Calu3 (cell line): ENCODE measurements at regions of chr9 and their contacts with region 1.

Region 1: GRCh38 chr9:127734747-127735529 is at the start of gene TOR2A:
- DNase-seq: peak; percentile 95
- H3K4me3 Mint-ChIP-seq: peak within 1 kb of the TSS; percentile 67
- H3K27ac Mint-ChIP-seq: no peak within 1 kb of the TSS
- H3K4me1 Mint-ChIP-seq: no peaks in the 10 kb centered on the region
- H3K27me3 Mint-ChIP-seq: peaks cover 39% of the 10 kb centered on the region
- CTCF ChIP-seq: peak; percentile 88
- total RNA-seq, gene TOR2A: 7.0 and 7.6 TPM in 2 replicates

Region 2: DNA sequence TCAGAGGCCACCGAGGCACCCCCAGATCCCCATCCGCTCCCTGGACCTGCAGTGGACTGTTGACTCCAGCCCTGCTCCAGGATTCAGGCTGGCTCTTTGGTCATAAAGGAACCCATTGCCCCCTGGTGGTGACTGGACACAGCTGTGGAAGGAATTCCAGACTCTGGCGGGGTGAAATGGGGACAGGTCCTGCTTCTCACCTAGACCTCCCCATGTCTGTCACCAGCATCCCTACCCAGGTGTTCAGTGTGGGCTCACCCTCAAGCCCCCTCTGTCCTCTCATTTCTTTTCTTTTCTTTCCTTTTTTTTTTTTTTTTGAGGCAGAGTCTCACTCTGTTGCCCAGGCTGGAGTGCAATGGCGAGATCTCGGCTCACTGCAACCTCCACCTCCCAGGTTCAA is 148.4 kb before region 1 on chr9:
- CTCF ChIA-PET with region 1: interaction called, 9 read pairs
- intact Hi-C with region 1: loop called (anchors 5 kb)
- DNase-seq: peak; percentile 79
- H3K4me3 Mint-ChIP-seq: no peak overlapping the region
- H3K27ac Mint-ChIP-seq: no peak overlapping the region
- H3K4me1 Mint-ChIP-seq: peaks cover 13% of the 10 kb centered on the region
- H3K27me3 Mint-ChIP-seq: no peaks in the 10 kb centered on the region
- CTCF ChIP-seq: peak; percentile 59

Region 3: GRCh38 chr9:127770905-127771569 is 36.1 kb after region 1 on chr9:
- CTCF ChIA-PET with region 1: interaction called, 10 read pairs
- intact Hi-C with region 1: no loop called
- DNase-seq: peak; percentile 96
- H3K4me3 Mint-ChIP-seq: peak overlapping the region; percentile 82
- H3K27ac Mint-ChIP-seq: no peak overlapping the region
- H3K4me1 Mint-ChIP-seq: no peaks in the 10 kb centered on the region
- H3K27me3 Mint-ChIP-seq: peaks cover 47% of the 10 kb centered on the region
- CTCF ChIP-seq: no peak

Region 4: DNA sequence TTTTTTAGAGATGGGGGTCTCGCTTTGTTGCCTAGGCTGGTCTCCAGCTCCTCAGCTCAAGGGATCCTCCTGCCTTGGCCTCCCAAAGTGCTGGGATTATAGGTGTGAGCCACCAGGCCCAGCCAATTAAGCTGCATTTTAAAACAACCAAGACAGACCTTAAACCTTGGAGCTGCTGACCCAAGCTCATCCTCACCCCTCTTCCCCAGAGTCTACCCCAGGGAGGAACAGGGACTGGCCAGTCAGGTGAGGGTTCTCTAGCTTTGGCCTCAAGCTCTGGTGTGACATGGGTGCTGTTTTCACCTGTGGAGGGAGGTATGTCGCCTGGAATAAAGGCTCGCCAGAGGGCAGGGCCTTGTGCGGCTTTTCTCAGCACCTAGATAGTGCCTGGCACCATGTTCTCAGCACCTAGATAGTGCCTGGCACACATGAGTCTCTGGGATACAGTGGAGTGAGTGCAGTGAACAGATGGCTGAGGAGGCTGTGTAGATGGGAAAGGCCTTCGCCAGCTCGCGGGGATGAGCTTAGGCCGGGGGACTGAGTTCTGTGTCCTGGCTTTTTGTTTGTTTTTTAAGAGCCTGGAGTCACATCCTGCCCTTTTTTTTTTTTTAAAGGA is 58.3 kb after region 1 on chr9:
- CTCF ChIA-PET with region 1: no interaction called
- intact Hi-C with region 1: no loop called
- DNase-seq: no peak
- H3K4me3 Mint-ChIP-seq: no peak overlapping the region
- H3K27ac Mint-ChIP-seq: no peak overlapping the region
- H3K4me1 Mint-ChIP-seq: no peaks in the 10 kb centered on the region
- H3K27me3 Mint-ChIP-seq: no peaks in the 10 kb centered on the region
- CTCF ChIP-seq: no peak

Region 5: DNA sequence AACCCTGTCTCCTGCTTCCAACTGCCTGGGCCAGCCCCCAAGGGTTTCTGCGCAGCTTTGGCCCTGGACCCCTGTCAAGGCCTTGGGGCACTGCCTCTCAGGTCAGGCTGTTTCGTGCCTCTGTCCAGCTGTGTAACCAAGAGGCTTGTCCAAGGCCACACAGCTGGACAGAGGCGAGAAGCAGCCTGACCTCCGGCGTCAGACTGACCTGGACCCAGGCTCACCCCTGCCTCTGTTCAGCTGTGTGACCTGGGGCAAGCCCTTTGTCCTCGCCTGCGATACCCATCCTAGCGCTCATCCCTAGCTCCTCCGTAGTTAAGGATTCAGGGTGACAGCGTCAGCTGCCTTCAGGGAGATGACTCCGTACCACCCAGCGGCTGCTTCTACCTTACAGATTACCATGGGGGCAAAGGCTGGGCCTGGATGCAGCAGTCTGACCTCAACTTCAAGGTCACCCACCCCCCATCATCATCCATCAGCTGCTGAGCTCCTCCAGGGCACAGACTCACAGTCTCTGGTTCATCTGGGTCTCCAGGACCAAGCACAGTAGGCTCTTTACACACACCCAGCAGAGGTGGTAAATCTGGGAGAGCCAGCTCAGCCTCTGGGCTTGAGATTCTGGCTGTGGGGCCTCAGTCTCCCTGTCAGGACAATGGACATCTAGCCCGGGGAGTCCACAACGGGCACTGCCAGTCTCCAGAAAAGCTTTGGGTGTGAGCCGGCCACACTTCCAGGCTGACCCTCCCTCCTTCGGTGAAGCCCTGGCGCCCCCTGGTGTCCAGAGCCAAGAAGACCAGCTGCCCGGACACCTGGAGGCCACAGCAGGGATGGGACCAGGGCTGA is 134.6 kb after region 1 on chr9:
- CTCF ChIA-PET with region 1: interaction called, 21 read pairs
- intact Hi-C with region 1: loop called (anchors 5 kb)
- DNase-seq: peak; percentile 89
- H3K4me3 Mint-ChIP-seq: no peak overlapping the region
- H3K27ac Mint-ChIP-seq: no peak overlapping the region
- H3K4me1 Mint-ChIP-seq: no peaks in the 10 kb centered on the region
- H3K27me3 Mint-ChIP-seq: no peaks in the 10 kb centered on the region
- CTCF ChIP-seq: peak; percentile 74

Region 6: DNA sequence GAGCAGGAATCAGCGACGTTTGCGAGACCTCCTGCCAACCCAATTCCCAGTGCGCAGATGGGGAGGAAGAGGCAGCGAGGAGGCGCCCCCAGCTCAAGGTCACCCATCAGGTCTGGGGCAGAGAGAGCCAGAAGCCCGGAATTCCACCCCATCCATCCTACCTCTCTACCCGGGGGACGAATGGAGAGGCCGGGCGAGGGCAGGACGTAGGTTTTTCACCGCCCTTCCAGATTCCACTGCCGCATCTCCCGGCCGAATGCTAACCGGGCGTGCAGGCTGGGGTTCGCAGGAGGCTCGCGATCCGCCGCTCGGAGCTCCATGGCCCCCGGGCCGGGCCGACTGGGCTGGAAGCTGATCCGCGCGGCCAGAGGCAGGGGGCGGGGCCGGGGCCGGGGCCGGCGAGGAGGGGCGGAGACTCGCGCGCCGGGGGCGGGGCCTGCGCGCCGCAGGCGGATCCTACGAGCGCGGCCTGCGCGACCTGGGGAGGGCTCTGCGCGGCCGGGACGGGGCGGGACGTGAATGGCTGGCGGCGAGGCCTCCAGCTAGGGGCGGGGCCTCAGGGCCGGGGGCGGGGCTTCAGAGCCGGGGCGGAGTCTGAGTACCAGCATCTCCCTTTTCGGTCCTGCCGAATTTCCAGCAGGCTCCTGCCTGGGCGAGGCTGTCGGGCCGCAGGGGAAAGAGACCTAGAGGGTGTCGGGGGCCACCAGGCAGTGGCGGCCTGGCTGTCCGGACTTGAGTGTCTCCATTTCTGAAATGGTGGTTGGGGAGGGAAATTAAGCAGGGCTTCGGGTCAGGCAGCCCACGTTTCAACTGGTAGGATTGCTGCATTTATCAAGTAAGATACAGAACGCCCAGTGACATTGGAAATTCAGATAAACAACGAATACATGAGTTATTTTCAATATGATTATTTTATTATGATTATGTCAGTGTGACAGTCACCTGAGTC is 182.0 kb after region 1 on chr9 and contains the start of gene ST6GALNAC4:
- CTCF ChIA-PET with region 1: interaction called, 10 read pairs
- intact Hi-C with region 1: no loop called
- DNase-seq: peak; percentile 91
- H3K4me3 Mint-ChIP-seq: peak within 1 kb of the TSS; percentile 65
- H3K27ac Mint-ChIP-seq: no peak within 1 kb of the TSS
- H3K4me1 Mint-ChIP-seq: peaks cover 13% of the 10 kb centered on the region
- H3K27me3 Mint-ChIP-seq: no peaks in the 10 kb centered on the region
- CTCF ChIP-seq: no peak
- total RNA-seq, gene ST6GALNAC4: 11.8 and 12.8 TPM in 2 replicates

Region 7: GRCh38 chr9:128231638-128232527 is 496.9 kb after region 1 on chr9:
- CTCF ChIA-PET with region 1: no interaction called
- intact Hi-C with region 1: no loop called
- DNase-seq: no peak
- H3K4me3 Mint-ChIP-seq: no peak overlapping the region
- H3K27ac Mint-ChIP-seq: no peak overlapping the region
- H3K4me1 Mint-ChIP-seq: no peaks in the 10 kb centered on the region
- H3K27me3 Mint-ChIP-seq: no peaks in the 10 kb centered on the region
- CTCF ChIP-seq: no peak